ENCODE measurements at regions of chr3 and their contacts with region 1.

Region 1: GRCh38 chr3:50519471-50520089 is 16.1 kb upstream of the CACNA2D2 start:
- DNase-seq: peak; percentile 27 to 78 (median 60)
- ATAC-seq: peak; percentile 79
- H3K4me3 ChIP-seq: no peak overlapping the region
- H3K4me3 Mint-ChIP-seq: no peak overlapping the region
- H3K27ac ChIP-seq: no peak overlapping the region
- H3K27ac Mint-ChIP-seq: no peak overlapping the region
- H3K4me1 ChIP-seq: peaks cover 0 to 3% of the 10 kb centered on the region in 2 donors
- H3K4me1 Mint-ChIP-seq: peaks cover 5 to 16% (median 12%) of the 10 kb centered on the region in 7 donors
- H3K27me3 ChIP-seq: no peaks in the 10 kb centered on the region
- H3K27me3 Mint-ChIP-seq: peaks cover 0 to 42% (median 4%) of the 10 kb centered on the region in 5 donors

Region 2: DNA sequence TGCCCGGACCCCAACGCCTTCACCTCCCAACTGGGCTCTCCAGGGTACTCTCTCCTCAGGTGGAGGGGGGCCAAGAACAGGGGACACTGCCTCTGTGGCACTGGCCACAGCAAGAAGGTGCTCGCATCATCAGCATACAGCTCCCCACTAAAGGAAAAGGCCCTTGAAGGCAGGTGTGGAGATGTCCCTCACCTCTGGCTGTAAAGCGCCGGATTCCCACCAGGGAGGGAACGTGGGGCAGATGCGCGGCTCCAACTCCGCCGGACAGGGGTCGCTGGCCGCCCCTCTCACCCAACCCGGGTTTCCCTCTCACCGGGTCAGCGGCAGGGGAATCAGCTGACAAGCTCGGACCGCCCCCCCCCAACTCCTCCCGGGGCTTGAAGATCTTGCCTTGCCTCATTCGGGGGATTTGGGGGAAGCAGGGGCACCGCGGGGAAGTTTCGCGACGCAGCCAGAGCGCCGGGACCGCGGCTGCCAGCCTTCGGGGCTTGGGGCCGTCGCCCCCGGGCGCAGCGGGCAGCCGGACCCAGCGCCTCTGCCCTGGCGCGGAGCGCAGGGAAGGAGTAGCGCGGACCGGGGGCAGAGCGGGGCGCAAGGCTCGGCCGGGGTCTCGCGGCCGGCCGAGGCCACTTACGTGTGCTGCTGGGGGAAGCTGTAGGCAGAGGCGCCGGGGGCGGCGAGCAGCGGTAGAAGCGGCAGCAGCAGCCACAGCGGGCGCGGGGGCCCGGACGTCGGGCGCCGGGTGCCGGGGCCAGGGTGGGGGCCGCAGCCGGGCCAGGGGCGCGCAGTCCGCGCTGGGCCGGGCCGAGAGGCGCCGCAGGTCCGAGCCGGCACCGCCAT is 16.8 kb before region 1 on chr3:
- CTCF ChIA-PET with region 1: no interaction called
- POLR2A ChIA-PET with region 1: no interaction called
- intact Hi-C with region 1: no loop called
- DNase-seq: peak in 1 of 9 donors; percentile 29
- ATAC-seq: peak; percentile 29
- H3K4me3 ChIP-seq: peak overlapping the region; percentile 44
- H3K4me3 Mint-ChIP-seq: peak overlapping the region; percentile 37 to 85 (median 73)
- H3K27ac ChIP-seq: no peak overlapping the region
- H3K27ac Mint-ChIP-seq: peak overlapping the region in 2 of 9 donors; percentile 32 to 36
- H3K4me1 ChIP-seq: peaks cover 0 to 5% of the 10 kb centered on the region in 2 donors
- H3K4me1 Mint-ChIP-seq: peaks cover 0 to 15% (median 10%) of the 10 kb centered on the region in 7 donors
- H3K27me3 ChIP-seq: peaks cover 0 to 5% of the 10 kb centered on the region in 2 donors
- H3K27me3 Mint-ChIP-seq: peaks cover 11 to 60% (median 22%) of the 10 kb centered on the region in 5 donors

Region 3: DNA sequence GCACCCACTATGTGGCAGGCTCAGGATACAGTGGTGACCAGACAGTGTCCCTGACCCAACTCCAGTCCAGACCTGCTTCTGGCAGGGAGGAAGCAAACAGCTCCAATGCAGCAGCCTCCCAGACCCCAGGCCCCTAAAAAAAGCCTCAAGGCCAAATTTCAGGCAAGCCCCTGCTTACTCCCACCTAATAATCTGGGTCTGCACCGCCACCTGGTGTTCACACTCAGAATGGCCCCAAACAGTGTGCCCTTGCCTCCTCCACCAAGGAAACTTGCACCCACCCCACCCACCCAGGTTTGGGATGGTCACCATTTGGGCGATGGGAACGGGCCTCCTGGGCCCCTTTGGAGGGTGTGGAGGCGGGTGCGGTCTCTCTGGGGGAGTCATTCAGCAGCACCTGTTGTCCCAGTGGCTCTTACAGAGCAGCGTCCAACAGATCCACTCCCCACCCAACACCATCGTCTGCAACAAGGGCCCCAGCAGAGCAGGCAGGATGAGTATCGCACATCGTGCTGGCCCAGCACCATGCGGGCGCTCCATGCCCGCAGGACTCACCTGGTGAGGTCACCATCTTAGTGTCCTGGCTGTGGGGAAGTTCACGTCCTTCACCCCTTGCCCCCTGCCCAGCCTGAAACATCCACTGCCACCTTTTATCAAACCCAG is 30.6 kb after region 1 on chr3:
- CTCF ChIA-PET with region 1: no interaction called
- POLR2A ChIA-PET with region 1: no interaction called
- intact Hi-C with region 1: loop called (anchors 1 to 5 kb)
- DNase-seq: peak; percentile 25 to 63 (median 45)
- ATAC-seq: peak; percentile 73
- H3K4me3 ChIP-seq: no peak overlapping the region
- H3K4me3 Mint-ChIP-seq: no peak overlapping the region
- H3K27ac ChIP-seq: no peak overlapping the region
- H3K27ac Mint-ChIP-seq: peak overlapping the region in 1 of 9 donors; percentile 28
- H3K4me1 ChIP-seq: no peaks in the 10 kb centered on the region
- H3K4me1 Mint-ChIP-seq: peaks cover 0 to 10% (median 0%) of the 10 kb centered on the region in 7 donors
- H3K27me3 ChIP-seq: no peaks in the 10 kb centered on the region
- H3K27me3 Mint-ChIP-seq: peaks cover 0 to under 1% (median 0%) of the 10 kb centered on the region in 5 donors

Measured in naive thymus-derived CD4-positive, alpha-beta T cell (primary cell).